ENCODE measurements at regions of chr1 and their contacts with region 1.

Region 1: GRCh38 chr1:229856009-229856650 is 210.9 kb upstream of the GALNT2 start:
- DNase-seq: no peak
- H3K4me3 ChIP-seq: no peak overlapping the region
- H3K27ac ChIP-seq: no peak overlapping the region
- H3K4me1 ChIP-seq: no peaks in the 10 kb centered on the region
- H3K27me3 ChIP-seq: peaks cover 14% of the 10 kb centered on the region; the same call in 1 of the 2 replicates
- CTCF ChIP-seq: no peak

Region 2: DNA sequence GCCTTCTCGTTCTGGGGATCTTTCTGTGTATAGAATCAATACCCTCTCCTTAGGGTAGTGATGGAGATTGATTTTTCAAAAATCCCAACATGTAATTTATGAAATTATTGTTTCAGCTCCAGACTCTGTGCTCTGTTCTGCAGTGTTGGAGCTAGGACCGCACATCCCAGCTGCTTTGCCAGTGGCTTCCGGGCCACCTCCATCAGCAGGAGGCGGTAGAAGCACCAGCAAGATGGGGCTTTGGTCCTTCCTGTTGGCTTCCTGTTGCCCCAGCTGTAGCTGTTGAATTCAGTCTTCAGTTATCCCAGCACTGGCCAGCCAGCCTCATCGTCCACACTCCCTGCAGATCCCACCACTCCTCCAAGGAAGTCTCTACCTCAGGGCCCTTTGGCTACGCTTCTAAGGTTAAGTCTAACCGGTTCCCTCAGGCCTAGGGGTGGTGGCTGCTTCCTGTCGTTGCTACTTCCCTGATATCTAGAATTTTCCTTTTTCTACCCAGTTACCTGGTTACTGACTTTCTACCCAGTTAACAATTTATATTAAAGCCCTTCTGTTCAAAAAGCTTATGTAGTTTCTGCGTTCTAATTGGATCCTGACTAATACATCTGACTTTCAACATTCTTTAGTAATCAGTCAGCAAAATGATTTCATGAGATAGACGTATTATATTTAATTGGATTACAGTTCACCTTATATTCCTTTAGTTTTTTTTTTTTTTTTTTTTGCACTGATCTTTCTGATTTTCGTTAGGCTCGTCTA is 235.5 kb after region 1 on chr1:
- CTCF ChIA-PET with region 1: no interaction called
- POLR2A ChIA-PET with region 1: interaction called, 12 read pairs
- intact Hi-C with region 1: no loop called
- DNase-seq: peak; percentile 65 to 94
- H3K4me3 ChIP-seq: peak overlapping the region; percentile 27; the same call in 1 of the 2 replicates
- H3K27ac ChIP-seq: peak overlapping the region; percentile 94
- H3K4me1 ChIP-seq: peaks cover 55% of the 10 kb centered on the region
- H3K27me3 ChIP-seq: no peaks in the 10 kb centered on the region
- CTCF ChIP-seq: no peak

Region 3: GRCh38 chr1:230167419-230167852 is 311.3 kb after region 1 on chr1:
- CTCF ChIA-PET with region 1: no interaction called
- POLR2A ChIA-PET with region 1: no interaction called
- intact Hi-C with region 1: loop called (anchors 10 kb)
- DNase-seq: peak in 1 of 2 experiments; percentile 20
- H3K4me3 ChIP-seq: no peak overlapping the region
- H3K27ac ChIP-seq: no peak overlapping the region
- H3K4me1 ChIP-seq: no peaks in the 10 kb centered on the region
- H3K27me3 ChIP-seq: no peaks in the 10 kb centered on the region
- CTCF ChIP-seq: peak; percentile 88

Region 4: DNA sequence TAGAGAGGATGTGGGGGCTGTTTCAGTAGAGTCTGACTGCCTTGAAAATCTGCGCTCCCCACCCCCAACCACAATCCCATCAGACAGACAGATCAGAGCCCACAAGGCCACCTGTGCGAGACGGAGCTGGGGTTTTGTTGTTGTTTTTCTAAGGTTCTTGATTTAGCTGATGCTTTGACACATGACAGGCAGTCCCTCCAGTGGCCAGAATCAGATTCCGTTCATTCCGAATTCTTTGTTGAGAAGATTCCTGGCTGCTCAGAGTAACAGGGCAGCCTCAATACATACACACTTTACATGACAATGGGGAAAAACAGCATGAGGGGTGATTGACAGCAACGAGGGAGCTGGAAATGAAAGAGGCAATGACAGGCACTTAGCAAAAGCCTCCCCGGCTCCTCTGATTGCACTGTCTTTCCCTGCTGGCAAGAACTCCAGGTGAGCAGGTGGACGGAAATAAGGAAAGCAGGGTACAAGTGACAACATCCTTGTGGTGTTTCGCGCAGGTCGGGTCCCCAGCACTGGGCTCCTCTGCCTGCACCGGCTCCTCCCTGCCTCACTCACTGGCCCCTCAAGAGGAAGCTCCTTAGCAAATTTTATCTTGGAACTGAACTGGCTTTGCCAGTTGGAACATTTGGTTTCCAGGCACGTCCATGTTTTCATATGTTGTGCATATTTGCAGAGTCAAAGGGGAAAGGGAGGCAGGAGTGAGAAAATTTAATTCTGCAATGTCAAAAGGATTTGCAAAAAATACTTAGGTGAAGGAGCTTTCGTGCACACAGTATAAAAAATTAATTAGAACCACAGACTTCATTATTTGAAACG is 421.3 kb after region 1 on chr1:
- CTCF ChIA-PET with region 1: no interaction called
- POLR2A ChIA-PET with region 1: no interaction called
- intact Hi-C with region 1: no loop called
- DNase-seq: no peak
- H3K4me3 ChIP-seq: no peak overlapping the region
- H3K27ac ChIP-seq: no peak overlapping the region
- H3K4me1 ChIP-seq: no peaks in the 10 kb centered on the region
- H3K27me3 ChIP-seq: no peaks in the 10 kb centered on the region
- CTCF ChIP-seq: no peak